ENCODE measurements at regions of chr12 and their contacts with region 1.

Region 1: DNA sequence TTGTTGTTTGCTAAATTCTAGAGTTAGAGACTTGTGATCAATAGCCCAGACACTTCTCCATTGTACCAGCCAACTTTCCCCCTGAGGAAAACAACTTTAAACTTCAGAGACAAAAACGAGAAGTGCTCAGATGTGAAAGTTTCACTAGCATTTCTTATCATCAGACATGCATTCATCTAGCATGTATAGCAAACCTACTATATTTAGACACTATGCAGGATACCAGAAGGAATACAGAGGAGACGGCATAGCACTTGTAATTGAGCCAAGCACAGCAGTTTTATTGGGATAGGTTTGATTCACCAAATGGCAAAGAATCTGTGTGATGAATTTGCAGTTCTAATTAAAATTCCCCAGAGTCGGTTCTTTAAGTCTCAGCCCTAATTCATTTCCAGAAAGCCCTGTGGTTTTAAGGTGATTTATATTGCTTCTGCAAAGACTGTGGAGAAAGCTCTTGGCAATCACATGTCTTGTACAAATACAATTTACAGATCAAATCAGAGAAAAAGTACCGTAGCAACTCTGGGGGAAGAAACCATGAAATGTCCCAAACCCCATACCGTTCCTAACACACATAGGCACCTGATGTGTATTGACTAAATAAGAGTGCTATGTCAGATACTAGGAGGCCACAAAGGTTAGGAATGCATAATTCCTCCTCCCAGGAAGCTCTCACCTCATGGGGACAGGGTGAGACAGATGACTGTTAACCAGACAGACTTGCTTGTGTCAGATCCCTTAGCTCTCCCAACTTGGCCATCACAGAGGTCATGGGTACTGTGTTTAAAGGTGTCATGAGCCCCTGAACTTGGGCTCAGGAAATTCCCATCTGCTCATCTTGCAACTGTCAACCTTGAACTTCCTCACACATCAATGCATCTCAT is 69.6 kb upstream of the KRAS start:
- DNase-seq: peak; percentile 61
- H3K4me3 Mint-ChIP-seq: peak overlapping the region; percentile 43
- H3K27ac Mint-ChIP-seq: peak overlapping the region; percentile 80
- H3K4me1 Mint-ChIP-seq: peaks cover 47% of the 10 kb centered on the region
- H3K27me3 Mint-ChIP-seq: peaks cover 13% of the 10 kb centered on the region

Region 2: DNA sequence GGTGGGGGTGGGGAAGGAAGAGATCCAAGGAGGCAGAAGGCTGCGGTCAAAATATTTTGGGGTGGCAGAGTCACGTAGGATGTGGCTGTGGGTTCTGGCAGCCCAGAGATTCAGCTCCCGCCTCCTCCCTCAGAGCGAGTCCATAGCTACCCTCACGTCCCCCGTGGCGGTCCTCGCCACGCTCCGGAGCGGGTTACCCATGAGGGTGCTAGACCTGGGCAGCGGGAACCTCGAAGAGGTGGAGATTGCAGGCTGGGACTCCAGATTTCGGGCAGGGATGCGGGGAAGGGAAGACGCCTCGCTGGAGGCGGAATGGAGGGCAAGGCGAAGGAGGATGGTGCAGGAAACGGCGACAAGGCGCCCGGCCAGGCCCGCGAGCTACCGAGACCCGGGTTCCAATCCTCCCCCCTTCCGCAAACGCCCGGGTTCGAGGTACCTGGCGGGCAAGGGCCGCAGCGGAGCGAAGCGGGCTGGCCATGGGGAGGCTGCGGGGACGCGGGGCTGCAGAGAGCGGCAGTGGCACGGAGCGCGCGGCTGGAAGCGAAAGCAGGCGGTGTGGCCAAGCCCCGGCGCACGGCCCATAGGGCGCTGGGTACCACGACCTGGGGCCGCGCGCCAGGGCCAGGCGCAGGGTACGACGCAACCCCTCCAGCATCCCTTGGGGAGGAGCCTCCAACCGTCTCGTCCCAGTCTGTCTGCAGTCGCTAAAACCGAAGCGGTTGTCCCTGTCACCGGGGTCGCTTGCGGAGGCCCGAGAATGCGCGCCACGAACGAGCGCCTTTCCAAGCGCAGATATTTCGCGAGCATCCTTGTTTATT is 417.6 kb before region 1 on chr12:
- intact Hi-C with region 1: loop called (anchors 5 kb)
- DNase-seq: peak; percentile 85
- H3K4me3 Mint-ChIP-seq: peak overlapping the region; percentile 98
- H3K27ac Mint-ChIP-seq: peak overlapping the region; percentile 98
- H3K4me1 Mint-ChIP-seq: peaks cover 35% of the 10 kb centered on the region
- H3K27me3 Mint-ChIP-seq: peaks cover 4% of the 10 kb centered on the region

Region 3: DNA sequence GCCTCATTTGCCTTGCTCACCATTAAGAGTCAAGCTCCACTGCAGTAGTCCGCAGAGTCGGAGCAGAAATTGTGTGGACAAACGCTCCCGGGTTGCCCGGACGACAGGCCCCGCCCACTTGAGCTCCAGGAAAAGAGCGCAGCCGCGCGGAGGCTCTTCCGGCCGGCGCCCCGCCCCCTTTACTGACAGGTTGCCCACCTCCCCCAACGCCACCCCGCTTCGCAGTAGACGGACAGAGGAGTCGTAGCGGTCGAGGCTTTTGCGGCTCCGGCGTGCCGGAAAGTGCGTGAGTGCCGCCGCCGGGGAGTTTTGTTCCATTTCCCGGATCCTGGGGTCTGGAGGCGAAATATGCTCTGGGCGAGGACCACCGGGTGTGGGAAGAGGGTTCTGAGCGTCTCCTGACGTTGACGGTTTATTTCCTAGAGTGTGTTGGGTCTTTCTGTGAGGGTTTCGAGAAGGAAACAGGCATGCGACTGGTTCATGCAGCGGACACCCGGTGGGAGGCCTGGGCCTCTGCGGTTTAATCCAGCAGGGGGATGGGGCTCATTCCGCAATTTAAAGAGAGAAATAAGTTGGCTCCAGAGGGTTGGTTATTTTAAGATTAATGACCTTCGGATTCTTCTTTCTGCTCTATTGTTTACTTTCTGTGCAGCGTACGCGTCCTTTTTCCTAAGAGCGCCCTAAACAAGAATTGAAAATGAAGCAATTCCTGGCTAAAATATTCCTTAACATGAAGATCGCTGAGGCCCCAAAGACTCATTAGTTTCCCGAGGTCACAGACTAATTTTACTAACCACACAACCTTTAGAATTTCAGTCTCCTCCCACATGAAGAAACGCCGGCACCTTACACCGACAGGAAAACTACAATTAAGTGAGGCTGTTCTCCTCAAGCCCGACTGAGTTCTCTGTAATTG is 125.1 kb before region 1 on chr12 and contains the starts of genes DNAI7 and ETFRF1:
- intact Hi-C with region 1: loop called (anchors 5 kb)
- DNase-seq: peak; percentile 98
- H3K4me3 Mint-ChIP-seq: peak within 1 kb of the TSS; percentile 94
- H3K27ac Mint-ChIP-seq: peak within 1 kb of the TSS; percentile 93
- H3K4me1 Mint-ChIP-seq: peaks cover 23% of the 10 kb centered on the region
- H3K27me3 Mint-ChIP-seq: no peaks in the 10 kb centered on the region
- total RNA-seq, gene DNAI7: not detected in 2 replicates
- total RNA-seq, gene ETFRF1: 9.9 TPM in 2 replicates

Region 4: GRCh38 chr12:25250744-25251730 is 69.3 kb before region 1 on chr12 and contains the start of gene KRAS:
- intact Hi-C with region 1: loop called (anchors 1 kb)
- DNase-seq: peak; percentile 97
- H3K4me3 Mint-ChIP-seq: peak within 1 kb of the TSS; percentile 86
- H3K27ac Mint-ChIP-seq: peak within 1 kb of the TSS; percentile 94
- H3K4me1 Mint-ChIP-seq: peaks cover 27% of the 10 kb centered on the region
- H3K27me3 Mint-ChIP-seq: peaks cover 13% of the 10 kb centered on the region
- total RNA-seq, gene KRAS: 26.4 and 27.4 TPM in 2 replicates

Region 5: GRCh38 chr12:25276199-25276937 is 44.0 kb before region 1 on chr12:
- intact Hi-C with region 1: loop called (anchors 5 kb)
- DNase-seq: peak; percentile 62
- H3K4me3 Mint-ChIP-seq: no peak overlapping the region
- H3K27ac Mint-ChIP-seq: peak overlapping the region; percentile 2
- H3K4me1 Mint-ChIP-seq: peaks cover 14% of the 10 kb centered on the region
- H3K27me3 Mint-ChIP-seq: no peaks in the 10 kb centered on the region

Region 6: DNA sequence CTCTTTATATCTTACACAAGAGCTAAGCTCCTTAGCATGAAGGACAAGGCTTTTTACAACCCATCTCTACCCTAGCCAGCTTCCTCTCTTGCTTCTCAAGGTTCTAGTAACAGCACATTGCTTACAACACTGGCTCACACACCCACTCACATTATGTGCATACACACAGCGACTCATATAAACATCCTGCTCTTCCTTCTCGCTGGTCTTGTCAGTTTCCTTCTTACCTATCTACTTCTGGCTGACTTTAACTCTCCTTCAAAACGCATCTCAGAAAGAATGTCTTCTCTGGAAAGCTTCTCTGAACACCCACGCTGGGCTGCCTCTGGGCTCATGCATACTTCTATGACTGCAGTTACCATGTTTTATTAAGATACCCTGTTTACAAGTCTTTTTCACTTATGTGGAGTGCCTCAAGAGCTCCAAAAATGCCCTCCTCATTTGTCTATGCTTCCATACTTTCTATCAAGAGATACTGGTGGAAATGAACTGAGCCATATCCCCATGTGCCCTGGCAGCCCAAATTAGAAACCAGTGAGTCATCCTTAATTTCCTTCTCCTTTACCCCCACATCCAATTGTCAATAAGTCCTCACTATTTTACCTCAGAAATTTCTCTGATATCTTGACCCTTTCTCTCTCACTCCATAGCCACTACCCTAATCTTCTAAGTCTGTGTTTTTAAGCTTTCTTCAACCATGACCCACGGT is 57.3 kb after region 1 on chr12:
- intact Hi-C with region 1: loop called (anchors 2 kb)
- DNase-seq: peak; percentile 83
- H3K4me3 Mint-ChIP-seq: peak overlapping the region; percentile 40
- H3K27ac Mint-ChIP-seq: peak overlapping the region; percentile 72
- H3K4me1 Mint-ChIP-seq: peaks cover 68% of the 10 kb centered on the region
- H3K27me3 Mint-ChIP-seq: no peaks in the 10 kb centered on the region